ENCODE measurements at regions of chr11 and their contacts with region 1.

Region 1: DNA sequence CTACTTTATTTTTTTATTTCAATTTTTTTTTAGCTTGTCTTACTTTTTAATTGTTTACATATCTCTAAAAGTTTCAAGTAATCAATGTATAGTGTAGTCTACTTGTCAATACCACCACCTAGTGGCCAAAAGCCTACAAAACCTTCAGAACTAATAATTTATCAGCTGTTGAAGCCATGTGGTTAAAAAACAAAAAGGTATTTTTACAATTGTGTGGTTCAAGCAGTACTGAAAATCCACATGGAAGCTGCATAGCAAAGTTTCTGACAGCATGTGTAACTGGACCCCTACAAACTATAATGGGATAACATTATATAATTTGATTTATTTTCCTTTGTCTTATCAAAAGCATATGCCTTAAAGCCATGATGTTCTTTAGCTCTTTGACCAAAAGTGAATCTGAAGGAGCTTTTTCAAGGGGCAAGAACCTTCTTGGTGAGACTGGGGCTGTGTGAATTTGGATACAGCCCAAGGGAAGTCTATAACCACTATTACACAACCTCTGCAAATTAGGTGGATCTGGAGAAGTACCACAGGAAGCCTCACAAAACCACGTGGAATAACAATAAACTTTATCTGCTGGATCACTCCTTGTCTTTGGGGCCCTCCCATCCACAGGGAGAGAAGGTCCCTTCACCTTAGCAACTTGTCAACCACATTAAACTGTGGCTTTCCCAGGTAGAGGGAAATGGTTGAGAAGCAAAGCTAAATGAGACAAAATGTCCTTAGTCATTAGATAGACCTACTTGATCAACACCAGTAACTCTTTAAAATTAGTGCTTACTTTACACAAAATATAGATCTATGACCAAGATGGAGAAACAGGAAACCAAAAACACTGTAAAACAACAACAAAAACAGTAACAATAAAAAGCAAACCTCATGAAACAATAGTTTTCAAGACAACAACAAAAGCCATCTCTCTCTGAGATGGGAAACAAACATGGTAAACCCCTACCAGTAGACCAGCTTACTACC is 9.9 kb downstream of the NARS2 start:
- DNase-seq: peak; percentile 43
- ATAC-seq: peak; percentile 61
- H3K4me3 Mint-ChIP-seq: no peak overlapping the region
- H3K27ac Mint-ChIP-seq: peak overlapping the region; percentile 59
- H3K4me1 Mint-ChIP-seq: peaks cover 31% of the 10 kb centered on the region
- H3K27me3 Mint-ChIP-seq: no peaks in the 10 kb centered on the region

Region 2: GRCh38 chr11:78228467-78228866 is 336.3 kb before region 1 on chr11:
- CTCF ChIA-PET with region 1: interaction called, 12 read pairs
- POLR2A ChIA-PET with region 1: no interaction called
- intact Hi-C with region 1: loop called (anchors 1 to 2 kb)
- DNase-seq: no peak
- ATAC-seq: no peak
- H3K4me3 Mint-ChIP-seq: no peak overlapping the region
- H3K27ac Mint-ChIP-seq: no peak overlapping the region
- H3K4me1 Mint-ChIP-seq: peaks cover 26% of the 10 kb centered on the region
- H3K27me3 Mint-ChIP-seq: no peaks in the 10 kb centered on the region

Region 3: DNA sequence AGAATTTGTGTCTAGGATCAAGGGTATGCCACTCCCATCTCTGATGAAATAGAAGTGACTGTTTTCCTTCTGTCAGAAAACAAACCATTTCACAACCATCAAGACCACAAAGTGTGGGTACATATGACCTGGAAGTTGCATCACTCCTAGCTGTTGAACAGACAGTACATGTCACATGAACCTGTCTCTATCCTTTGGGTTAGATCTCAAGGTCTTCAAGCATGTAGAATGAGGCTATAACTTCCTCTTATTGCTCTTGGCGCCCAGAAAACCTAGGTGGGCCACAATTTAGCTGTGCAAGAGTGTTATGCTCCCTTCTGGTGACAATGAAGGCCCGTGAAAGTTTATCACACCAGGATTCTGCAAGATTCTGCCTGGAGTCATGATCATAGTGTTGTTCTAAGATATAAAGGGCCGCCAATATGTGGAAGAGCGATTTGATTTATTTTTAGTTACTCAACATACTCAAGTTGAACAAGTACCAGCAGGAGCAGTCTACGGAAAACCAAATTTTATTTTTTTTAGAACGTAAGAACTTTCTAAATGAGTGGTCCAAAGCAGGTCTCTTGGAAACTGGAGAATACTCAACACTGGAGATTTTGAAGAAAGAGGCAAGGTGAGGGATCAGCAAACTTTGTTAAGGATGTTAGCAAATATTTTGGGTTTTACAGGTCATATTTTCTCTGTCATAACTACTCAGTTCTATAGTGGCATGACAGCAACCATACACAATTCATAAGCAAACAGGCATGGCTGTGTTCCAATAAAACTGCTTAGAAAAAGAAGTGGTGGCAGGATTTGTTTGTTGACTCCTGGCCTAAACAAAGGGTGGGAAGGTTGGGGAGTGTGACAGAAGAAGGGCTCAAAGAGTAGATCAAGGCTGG is 274.2 kb before region 1 on chr11:
- CTCF ChIA-PET with region 1: no interaction called
- POLR2A ChIA-PET with region 1: no interaction called
- intact Hi-C with region 1: loop called in 1 of 2 experiments (anchors 5 kb)
- DNase-seq: peak; percentile 43
- ATAC-seq: peak; percentile 54
- H3K4me3 Mint-ChIP-seq: no peak overlapping the region
- H3K27ac Mint-ChIP-seq: peak overlapping the region; percentile 85
- H3K4me1 Mint-ChIP-seq: peaks cover 33% of the 10 kb centered on the region
- H3K27me3 Mint-ChIP-seq: no peaks in the 10 kb centered on the region

Region 4: GRCh38 chr11:78432058-78432515 is 132.7 kb before region 1 on chr11:
- CTCF ChIA-PET with region 1: interaction called, 12 read pairs
- POLR2A ChIA-PET with region 1: no interaction called
- intact Hi-C with region 1: no loop called
- DNase-seq: peak; percentile 23
- ATAC-seq: no peak
- H3K4me3 Mint-ChIP-seq: no peak overlapping the region
- H3K27ac Mint-ChIP-seq: no peak overlapping the region
- H3K4me1 Mint-ChIP-seq: peaks cover 16% of the 10 kb centered on the region
- H3K27me3 Mint-ChIP-seq: no peaks in the 10 kb centered on the region

Region 5: DNA sequence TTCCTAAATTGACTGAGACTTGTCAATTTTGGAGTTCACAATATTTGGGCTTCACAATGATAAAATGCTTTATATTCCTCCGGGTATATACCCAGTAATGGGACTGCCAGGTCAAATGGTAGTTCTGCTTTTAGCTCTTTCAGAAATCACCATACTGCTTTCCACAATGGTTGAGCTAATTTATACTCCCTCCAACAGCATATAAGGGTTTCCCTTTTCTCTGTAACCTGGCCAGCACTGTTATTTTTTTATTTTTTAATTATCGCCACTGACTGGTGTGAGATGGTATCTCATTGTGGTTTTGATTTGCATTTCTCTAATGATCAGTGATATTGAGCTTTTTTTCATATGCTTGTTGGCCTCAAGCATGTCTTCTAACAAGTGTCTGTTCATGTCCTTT is 11.9 kb before region 1 on chr11:
- CTCF ChIA-PET with region 1: interaction called, 10 read pairs
- POLR2A ChIA-PET with region 1: no interaction called
- intact Hi-C with region 1: no loop called
- DNase-seq: no peak
- ATAC-seq: no peak
- H3K4me3 Mint-ChIP-seq: no peak overlapping the region
- H3K27ac Mint-ChIP-seq: no peak overlapping the region
- H3K4me1 Mint-ChIP-seq: peaks cover 23% of the 10 kb centered on the region
- H3K27me3 Mint-ChIP-seq: no peaks in the 10 kb centered on the region

Region 6: GRCh38 chr11:78586452-78587046 is 21.8 kb after region 1 on chr11:
- CTCF ChIA-PET with region 1: interaction called, 16 read pairs
- POLR2A ChIA-PET with region 1: no interaction called
- intact Hi-C with region 1: no loop called
- DNase-seq: no peak
- ATAC-seq: peak; percentile 44
- H3K4me3 Mint-ChIP-seq: no peak overlapping the region
- H3K27ac Mint-ChIP-seq: no peak overlapping the region
- H3K4me1 Mint-ChIP-seq: no peaks in the 10 kb centered on the region
- H3K27me3 Mint-ChIP-seq: peaks cover 7% of the 10 kb centered on the region

Region 7: GRCh38 chr11:78886616-78887015 is 321.8 kb after region 1 on chr11:
- CTCF ChIA-PET with region 1: no interaction called
- POLR2A ChIA-PET with region 1: no interaction called
- intact Hi-C with region 1: no loop called
- DNase-seq: no peak
- ATAC-seq: no peak
- H3K4me3 Mint-ChIP-seq: no peak overlapping the region
- H3K27ac Mint-ChIP-seq: no peak overlapping the region
- H3K4me1 Mint-ChIP-seq: no peaks in the 10 kb centered on the region
- H3K27me3 Mint-ChIP-seq: peaks cover 12% of the 10 kb centered on the region

Measured in activated CD4-positive, alpha-beta T cell treated with anti-CD3 and anti-CD28 coated beads for 36 hours (primary cell).